ENCODE measurements at regions of chr14 and their contacts with region 1.

Region 1: GRCh38 chr14:55088356-55088755 is 36.9 kb downstream of the MAPK1IP1L start:
- DNase-seq: no peak
- H3K4me3 ChIP-seq: no peak overlapping the region
- H3K27ac ChIP-seq: no peak overlapping the region
- H3K4me1 ChIP-seq: no peaks in the 10 kb centered on the region
- H3K27me3 ChIP-seq: no peaks in the 10 kb centered on the region
- CTCF ChIP-seq: no peak
- POLR2A ChIP-seq: no peak

Region 2: GRCh38 chr14:55160989-55161388 is 72.6 kb after region 1 on chr14:
- intact Hi-C with region 1: loop called (anchors 2 kb)
- DNase-seq: no peak
- H3K4me3 ChIP-seq: no peak overlapping the region
- H3K27ac ChIP-seq: no peak overlapping the region
- H3K4me1 ChIP-seq: no peaks in the 10 kb centered on the region
- H3K27me3 ChIP-seq: no peaks in the 10 kb centered on the region
- CTCF ChIP-seq: peak; percentile 11 to 81 (median 70)
- POLR2A ChIP-seq: no peak

Region 3: DNA sequence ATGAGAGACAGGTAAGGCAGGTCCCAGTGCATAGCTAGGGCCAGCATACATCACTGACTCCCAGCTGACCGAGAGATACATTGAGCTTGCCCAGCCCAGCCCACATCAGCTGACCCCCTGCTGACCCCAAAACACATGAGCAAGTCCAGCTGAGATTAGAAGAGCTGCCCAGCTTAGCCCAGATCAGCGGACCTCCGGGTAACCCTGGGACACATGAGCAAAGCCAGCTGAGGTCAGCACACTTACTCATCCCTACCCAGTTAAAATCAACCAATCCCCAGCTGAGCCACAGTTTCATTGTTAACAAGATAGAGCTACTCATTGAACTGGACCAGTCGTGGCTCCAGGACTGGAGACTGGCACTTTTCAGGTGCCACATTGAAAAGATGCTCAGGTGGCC is 161.1 kb after region 1 on chr14:
- intact Hi-C with region 1: no loop called
- DNase-seq: no peak
- H3K4me3 ChIP-seq: no peak overlapping the region
- H3K27ac ChIP-seq: no peak overlapping the region
- H3K4me1 ChIP-seq: no peaks in the 10 kb centered on the region
- H3K27me3 ChIP-seq: no peaks in the 10 kb centered on the region
- CTCF ChIP-seq: no peak
- POLR2A ChIP-seq: no peak